ENCODE measurements at regions of chr1 and their contacts with region 1.

Region 1: DNA sequence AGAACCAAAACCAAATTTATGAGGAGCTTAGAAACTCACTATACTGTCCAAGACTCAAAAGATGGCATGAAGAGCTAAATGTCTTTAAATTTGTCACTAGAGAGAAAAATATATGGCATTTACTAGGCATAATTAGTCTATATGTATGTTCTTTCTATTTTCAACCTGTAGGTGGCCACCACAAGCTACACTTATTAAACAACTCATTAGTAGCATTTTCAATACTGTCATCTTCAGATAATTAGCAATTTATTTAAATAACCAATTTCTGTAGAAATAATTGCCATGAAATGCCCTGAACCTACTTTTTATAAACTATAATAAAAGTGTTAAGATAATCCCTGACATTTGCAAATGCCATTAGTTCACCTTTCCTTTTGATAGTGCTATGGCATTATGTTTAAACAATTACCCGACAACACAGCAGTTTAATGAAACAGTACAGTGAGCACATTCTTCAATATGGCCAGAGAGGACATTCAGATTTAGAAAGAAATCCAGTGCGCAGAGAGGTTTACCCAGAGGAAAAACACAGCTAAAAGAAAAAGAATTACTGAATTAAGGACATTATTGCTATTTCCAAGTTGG is 522.5 kb downstream of the PTBP2 start:
- DNase-seq: no peak
- ATAC-seq: no peak
- H3K4me3 ChIP-seq: no peak overlapping the region
- H3K27ac ChIP-seq: no peak overlapping the region
- H3K4me1 ChIP-seq: peaks cover 0 to 10% (median 0%) of the 10 kb centered on the region in 12 donors
- H3K27me3 ChIP-seq: no peaks in the 10 kb centered on the region
- CTCF ChIP-seq: peak; percentile 17 to 56 (median 42)
- POLR2A ChIP-seq: no peak

Region 2: DNA sequence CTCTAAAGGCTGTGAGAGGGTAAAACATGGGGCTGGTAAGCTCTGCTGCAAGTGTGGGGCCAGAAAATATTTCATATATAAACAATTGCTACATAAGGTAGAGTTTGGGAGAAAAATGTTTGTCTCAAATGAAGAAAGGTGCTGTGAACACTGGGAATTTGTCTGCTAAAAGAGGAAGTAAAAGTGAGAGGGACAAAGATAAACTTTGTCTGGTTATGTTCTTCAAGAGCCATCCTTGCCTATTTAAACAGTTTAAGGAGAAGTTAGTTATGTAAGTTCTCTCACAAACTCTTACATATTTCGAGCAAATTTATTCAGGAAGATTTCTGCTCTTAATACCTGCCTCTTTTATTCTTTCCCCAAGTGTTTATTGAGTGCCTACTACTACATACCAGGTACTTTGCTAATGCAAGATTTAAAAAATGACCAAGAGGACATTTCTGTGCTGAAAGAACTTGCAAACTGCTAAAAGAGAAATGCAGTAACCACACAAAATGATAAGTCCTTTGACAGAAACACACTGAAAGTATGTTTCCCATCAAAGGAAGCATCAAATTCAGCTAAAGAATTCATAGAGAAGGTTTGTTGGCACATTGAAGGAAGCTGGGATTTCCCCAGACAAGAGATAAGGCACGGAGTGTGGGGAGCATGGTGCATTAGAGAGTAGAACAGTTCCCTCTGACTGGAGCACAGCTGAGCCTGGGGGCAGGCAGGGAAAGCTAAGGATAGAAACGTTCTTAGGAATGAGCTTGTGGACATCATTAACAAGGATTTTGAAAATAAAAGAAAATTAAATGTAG is 26.6 kb after region 1 on chr1:
- intact Hi-C with region 1: no loop called
- DNase-seq: no peak
- ATAC-seq: no peak
- H3K4me3 ChIP-seq: no peak overlapping the region
- H3K27ac ChIP-seq: no peak overlapping the region
- H3K4me1 ChIP-seq: peaks cover 0 to 17% (median 0%) of the 10 kb centered on the region in 12 donors
- H3K27me3 ChIP-seq: no peaks in the 10 kb centered on the region
- CTCF ChIP-seq: no peak
- POLR2A ChIP-seq: no peak

Region 3: GRCh38 chr1:97340951-97341350 is 96.9 kb after region 1 on chr1:
- intact Hi-C with region 1: no loop called
- DNase-seq: no peak
- ATAC-seq: no peak
- H3K4me3 ChIP-seq: no peak overlapping the region
- H3K27ac ChIP-seq: no peak overlapping the region
- H3K4me1 ChIP-seq: no peaks in the 10 kb centered on the region
- H3K27me3 ChIP-seq: no peaks in the 10 kb centered on the region
- CTCF ChIP-seq: no peak
- POLR2A ChIP-seq: no peak

Region 4: DNA sequence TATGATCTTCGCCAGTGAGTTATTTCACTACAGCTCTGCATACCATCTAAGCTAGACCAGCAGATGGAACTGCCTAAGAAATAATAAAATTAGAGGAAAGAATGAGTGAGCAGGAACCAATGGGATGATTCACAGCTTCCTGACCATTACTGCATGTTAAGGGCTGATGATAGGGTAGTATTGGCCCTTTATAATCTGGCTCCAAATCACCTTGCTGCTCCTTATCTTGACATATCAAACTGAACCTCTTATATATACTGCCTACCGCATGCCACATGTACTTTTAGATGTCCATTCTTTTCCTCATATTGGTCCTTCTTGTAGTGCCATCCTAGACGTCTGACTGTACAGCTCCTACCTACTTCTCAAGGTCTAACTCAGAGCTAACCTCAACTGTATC is 152.4 kb after region 1 on chr1:
- intact Hi-C with region 1: no loop called
- DNase-seq: no peak
- ATAC-seq: no peak
- H3K4me3 ChIP-seq: no peak overlapping the region
- H3K27ac ChIP-seq: no peak overlapping the region
- H3K4me1 ChIP-seq: no peaks in the 10 kb centered on the region
- H3K27me3 ChIP-seq: no peaks in the 10 kb centered on the region
- CTCF ChIP-seq: no peak
- POLR2A ChIP-seq: no peak

Region 5: DNA sequence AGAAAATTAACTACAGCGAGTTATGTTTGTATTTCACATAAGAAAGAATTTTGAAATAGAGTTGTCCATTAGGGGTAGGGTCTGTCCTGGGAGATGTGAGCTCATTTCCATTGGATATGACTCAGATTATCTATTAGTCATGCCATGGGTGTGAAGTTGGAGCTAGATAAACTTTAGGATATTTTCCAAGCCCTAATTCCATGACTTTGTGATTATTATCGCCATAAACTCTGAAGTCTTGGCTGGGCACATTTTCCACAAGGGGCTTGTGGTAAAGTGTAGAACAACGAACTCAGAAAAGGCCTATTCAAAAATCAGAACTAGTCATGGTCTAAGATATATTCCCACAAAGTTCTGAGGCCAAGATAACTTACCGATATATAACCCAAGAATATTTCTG is 280.1 kb after region 1 on chr1:
- intact Hi-C with region 1: loop called in 7 of 10 experiments (anchors 2 to 10 kb)
- DNase-seq: no peak
- ATAC-seq: no peak
- H3K4me3 ChIP-seq: no peak overlapping the region
- H3K27ac ChIP-seq: no peak overlapping the region
- H3K4me1 ChIP-seq: no peaks in the 10 kb centered on the region
- H3K27me3 ChIP-seq: no peaks in the 10 kb centered on the region
- CTCF ChIP-seq: no peak
- POLR2A ChIP-seq: no peak

Region 6: DNA sequence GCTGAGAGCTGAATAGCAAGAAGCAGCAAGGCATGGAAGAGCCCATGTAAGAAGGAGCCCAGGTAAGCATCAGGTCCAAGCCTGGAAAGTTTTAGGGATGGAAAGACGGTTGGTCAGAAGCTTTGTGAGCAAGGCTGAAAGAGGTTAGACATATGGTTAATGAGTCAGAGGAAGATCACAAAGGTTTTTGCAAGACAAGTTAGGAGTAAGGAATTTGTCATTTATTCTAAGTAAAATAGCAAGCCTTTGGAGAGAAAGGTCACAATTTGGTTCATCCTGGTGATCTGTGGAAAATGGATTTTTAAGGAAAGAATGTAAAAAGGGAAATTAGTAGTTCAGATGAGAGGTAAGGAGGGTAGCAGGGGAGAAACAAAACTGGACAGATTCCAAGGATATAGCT is 570.1 kb after region 1 on chr1:
- intact Hi-C with region 1: loop called in 1 of 10 experiments (anchors 10 kb)
- DNase-seq: no peak
- ATAC-seq: no peak
- H3K4me3 ChIP-seq: no peak overlapping the region
- H3K27ac ChIP-seq: no peak overlapping the region
- H3K4me1 ChIP-seq: peaks cover 0 to 3% (median 0%) of the 10 kb centered on the region in 12 donors
- H3K27me3 ChIP-seq: no peaks in the 10 kb centered on the region
- CTCF ChIP-seq: no peak
- POLR2A ChIP-seq: no peak